ENCODE measurements at regions of chr5 and their contacts with region 1.

Region 1: DNA sequence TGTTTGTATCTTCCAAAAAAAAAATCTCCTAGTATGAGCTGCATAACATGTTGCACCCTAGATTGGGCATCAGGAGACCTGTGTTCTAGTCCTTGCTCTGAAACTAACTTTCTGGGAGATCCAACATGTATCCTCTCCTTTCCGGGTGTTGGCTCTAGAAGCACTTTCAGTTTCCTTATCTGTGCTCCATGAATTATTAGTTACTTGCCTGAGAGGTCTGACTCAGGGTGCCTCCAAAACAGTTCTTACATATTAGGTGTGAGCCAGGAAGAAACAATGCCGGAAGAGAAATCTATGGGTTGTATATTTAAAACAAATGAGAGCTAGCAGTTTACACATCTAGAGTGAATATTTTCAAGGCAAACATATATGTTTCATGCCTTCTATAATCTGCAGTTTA is 36.7 kb upstream of the SLC36A2 start:
- DNase-seq: peak; percentile 26
- H3K4me3 ChIP-seq: no peak overlapping the region
- H3K27ac ChIP-seq: no peak overlapping the region
- H3K4me1 ChIP-seq: no peaks in the 10 kb centered on the region
- H3K27me3 ChIP-seq: no peaks in the 10 kb centered on the region
- CTCF ChIP-seq: no peak

Region 2: DNA sequence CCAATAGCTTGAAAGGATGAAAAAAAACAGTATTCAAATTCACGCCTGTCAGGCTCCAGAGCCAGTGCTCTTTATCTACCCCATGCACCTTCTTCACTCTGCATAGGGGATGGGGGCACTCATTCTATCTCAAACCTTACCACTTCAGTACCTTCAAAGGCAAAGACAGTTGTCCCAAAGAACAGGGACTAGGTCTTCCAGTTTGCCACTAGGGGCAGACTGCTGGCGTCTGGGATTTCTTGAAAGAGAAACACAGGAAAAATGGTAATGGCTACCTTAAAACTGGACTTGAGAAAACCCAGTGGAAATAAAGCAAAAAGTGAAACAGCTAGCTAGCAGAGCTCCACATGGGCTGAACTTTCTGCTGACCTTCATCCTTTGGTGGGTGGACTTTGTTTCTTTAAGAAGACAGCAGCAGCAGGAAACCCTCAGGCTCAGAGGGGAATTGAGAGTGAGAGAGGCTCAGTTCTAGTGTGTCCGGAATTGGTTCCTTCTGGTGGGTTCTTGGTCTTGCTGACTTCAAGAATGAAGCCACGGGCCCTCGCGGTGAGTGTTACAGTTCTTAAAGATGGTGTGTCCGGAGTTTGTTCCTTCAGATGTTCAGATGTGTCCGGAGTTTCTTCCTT is 22.3 kb after region 1 on chr5:
- CTCF ChIA-PET with region 1: no interaction called
- dilution Hi-C with region 1: no loop called
- in situ Hi-C with region 1: no loop called
- intact Hi-C with region 1: no loop called
- DNase-seq: no peak
- H3K4me3 ChIP-seq: no peak overlapping the region
- H3K27ac ChIP-seq: no peak overlapping the region
- H3K4me1 ChIP-seq: no peaks in the 10 kb centered on the region
- H3K27me3 ChIP-seq: no peaks in the 10 kb centered on the region
- CTCF ChIP-seq: peak; percentile 59 to 62

Region 3: GRCh38 chr5:151499501-151500035 is 115.5 kb after region 1 on chr5:
- CTCF ChIA-PET with region 1: interaction called, 3 read pairs
- dilution Hi-C with region 1: no loop called
- in situ Hi-C with region 1: no loop called
- intact Hi-C with region 1: loop called (anchors 2 kb)
- DNase-seq: no peak
- H3K4me3 ChIP-seq: no peak overlapping the region
- H3K27ac ChIP-seq: no peak overlapping the region
- H3K4me1 ChIP-seq: no peaks in the 10 kb centered on the region
- H3K27me3 ChIP-seq: no peaks in the 10 kb centered on the region
- CTCF ChIP-seq: no peak